AG04450 (cell line): ENCODE measurements at regions of chr17 and their contacts with region 1.

Region 1: GRCh38 chr17:76868176-76868668 is at the start of gene MGAT5B:
- DNase-seq: peak; percentile 24
- H3K4me3 ChIP-seq: peak within 1 kb of the TSS; percentile 29
- H3K27ac ChIP-seq: peak within 1 kb of the TSS; percentile 40
- H3K27me3 ChIP-seq: peaks cover 11% of the 10 kb centered on the region
- CTCF ChIP-seq: peak; percentile 53
- polyA plus RNA-seq, gene MGAT5B: 0.69 and 0.81 TPM in 2 replicates

Region 2: DNA sequence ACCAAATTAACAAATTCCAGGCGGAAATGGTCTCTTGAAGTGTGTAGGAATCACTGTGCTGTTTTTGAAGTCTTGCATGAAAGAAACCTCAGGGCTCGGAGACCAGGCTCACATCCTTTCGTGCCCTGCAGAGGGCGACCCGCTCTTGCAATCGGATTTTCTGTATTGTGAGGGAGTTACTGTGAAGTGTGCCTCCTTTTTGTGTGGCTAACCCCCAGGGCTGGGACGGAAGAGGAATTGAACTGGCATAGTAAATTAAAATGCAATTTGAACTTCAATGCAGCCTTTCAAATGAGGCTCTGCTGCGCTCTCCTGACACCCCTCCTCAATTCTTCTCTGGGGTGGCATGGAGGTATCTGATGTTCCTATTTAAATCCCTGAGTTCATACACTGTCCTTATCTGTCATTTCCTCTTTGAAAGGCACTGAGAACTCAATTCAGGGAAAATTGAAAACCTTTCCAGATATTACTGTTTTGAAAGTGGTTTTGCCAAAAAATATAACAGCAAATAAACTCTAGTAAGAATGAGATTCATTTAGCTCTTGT is 51.6 kb before region 1 on chr17:
- CTCF ChIA-PET with region 1: no interaction called
- POLR2A ChIA-PET with region 1: no interaction called
- DNase-seq: peak; percentile 3
- H3K4me3 ChIP-seq: no peak overlapping the region
- H3K27ac ChIP-seq: no peak overlapping the region
- H3K27me3 ChIP-seq: peaks cover 5% of the 10 kb centered on the region
- CTCF ChIP-seq: peak; percentile 76

Region 3: DNA sequence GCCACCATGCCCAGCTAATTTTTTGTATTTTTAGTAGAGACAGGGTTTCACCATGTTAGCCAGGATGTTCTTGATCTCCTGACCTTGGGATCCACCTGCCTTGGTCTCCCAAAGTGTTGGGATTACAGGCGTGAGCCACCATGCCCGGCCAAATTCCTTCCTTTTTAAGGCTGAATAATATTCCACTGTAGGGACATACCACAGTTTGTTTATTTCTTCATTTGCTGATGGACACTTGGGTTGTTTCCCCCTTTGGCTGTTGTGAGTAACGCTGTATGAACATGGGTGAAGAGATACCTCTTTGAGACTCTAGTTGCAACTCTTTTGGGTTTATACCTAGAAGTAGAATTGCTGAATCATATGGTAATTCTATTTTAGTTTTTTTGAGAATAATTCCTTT is 13.1 kb before region 1 on chr17:
- CTCF ChIA-PET with region 1: interaction called, 11 read pairs
- POLR2A ChIA-PET with region 1: no interaction called
- DNase-seq: no peak
- H3K4me3 ChIP-seq: no peak overlapping the region
- H3K27ac ChIP-seq: no peak overlapping the region
- H3K27me3 ChIP-seq: peaks cover 16% of the 10 kb centered on the region
- CTCF ChIP-seq: no peak

Region 4: DNA sequence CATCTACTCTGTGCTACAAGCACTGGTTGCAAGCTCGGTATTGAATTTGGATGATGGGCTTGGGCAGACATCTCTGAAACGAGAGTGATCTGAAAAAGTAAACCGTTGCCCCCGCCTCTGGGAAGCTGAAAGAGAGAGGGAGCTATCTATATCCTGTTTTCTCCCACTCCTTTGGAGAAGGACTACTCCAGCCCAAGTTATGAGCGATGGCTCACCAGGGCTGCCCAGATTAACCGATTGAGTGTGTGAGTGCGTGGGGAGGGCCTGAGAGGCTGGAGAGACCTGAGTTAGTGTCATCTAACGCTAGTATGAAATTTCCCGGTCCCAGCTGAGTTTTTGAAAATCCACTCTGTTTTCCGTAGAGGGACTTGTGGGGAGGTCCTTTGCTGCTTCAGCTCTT is 11.5 kb after region 1 on chr17:
- CTCF ChIA-PET with region 1: interaction called, 12 read pairs
- POLR2A ChIA-PET with region 1: interaction called, 3 read pairs
- DNase-seq: no peak
- H3K4me3 ChIP-seq: no peak overlapping the region
- H3K27ac ChIP-seq: no peak overlapping the region
- H3K27me3 ChIP-seq: peaks cover 9% of the 10 kb centered on the region
- CTCF ChIP-seq: no peak

Region 5: GRCh38 chr17:76924345-76925342 is 56.4 kb after region 1 on chr17:
- CTCF ChIA-PET with region 1: no interaction called
- POLR2A ChIA-PET with region 1: no interaction called
- DNase-seq: no peak
- H3K4me3 ChIP-seq: no peak overlapping the region
- H3K27ac ChIP-seq: no peak overlapping the region
- H3K27me3 ChIP-seq: peaks cover 8% of the 10 kb centered on the region
- CTCF ChIP-seq: no peak

Region 6: DNA sequence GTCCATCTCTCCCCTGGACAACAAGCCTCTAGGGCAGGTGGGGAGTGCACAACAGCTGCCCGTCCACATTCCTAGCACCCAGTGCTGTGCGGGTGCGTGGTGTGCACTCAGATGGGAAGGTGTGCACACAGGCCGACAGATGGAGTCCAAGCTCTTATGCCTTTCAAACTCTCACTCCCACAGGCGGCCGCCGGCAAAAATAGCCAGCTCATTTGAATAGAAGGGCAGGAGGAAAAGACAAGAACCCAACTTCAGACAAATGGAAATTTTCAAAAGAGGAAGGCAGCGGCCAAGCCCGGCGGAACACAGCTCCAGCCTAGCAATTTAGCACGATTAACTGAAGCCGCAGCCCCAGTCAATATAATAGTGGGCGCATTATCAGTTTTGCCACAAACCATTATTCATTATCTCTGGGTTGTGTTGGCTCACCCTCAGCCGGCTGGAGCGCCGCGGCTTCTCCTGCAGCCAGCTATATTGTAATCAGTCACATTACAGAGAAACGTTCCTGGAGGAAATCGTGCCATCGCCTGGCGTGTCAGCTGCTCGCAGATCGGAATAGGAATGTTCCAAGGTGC is 168.7 kb after region 1 on chr17:
- CTCF ChIA-PET with region 1: interaction called, 3 read pairs
- POLR2A ChIA-PET with region 1: interaction called, 10 read pairs
- DNase-seq: no peak
- H3K4me3 ChIP-seq: no peak overlapping the region
- H3K27ac ChIP-seq: no peak overlapping the region
- H3K27me3 ChIP-seq: peaks cover 42% of the 10 kb centered on the region
- CTCF ChIP-seq: no peak

Region 7: DNA sequence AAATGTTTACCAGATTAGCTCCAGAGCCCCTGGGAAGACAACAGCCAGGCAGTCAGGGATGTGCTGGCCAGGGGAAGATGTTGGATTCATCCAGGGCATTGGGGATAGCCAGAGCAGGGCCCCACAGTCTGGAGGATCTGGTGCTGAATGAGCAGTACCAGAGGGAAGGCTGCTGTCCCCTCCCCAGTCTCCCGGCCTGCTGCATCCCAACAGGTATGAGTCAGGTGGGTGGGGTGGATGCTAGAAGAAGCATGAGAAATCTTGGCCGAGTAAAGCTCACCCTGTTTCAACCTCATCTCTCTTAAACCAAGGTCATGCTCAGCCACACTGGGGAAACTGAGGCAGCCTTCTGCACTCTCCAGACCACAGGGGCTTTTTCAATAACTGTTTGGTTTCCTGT is 200.7 kb after region 1 on chr17:
- CTCF ChIA-PET with region 1: interaction called, 43 read pairs
- POLR2A ChIA-PET with region 1: interaction called, 3 read pairs
- DNase-seq: no peak
- H3K4me3 ChIP-seq: no peak overlapping the region
- H3K27ac ChIP-seq: no peak overlapping the region
- H3K27me3 ChIP-seq: peaks cover 38% of the 10 kb centered on the region
- CTCF ChIP-seq: no peak